Breast epithelium (tissue), 4 donors: ENCODE measurements at regions of chr15 and their contacts with region 1.

Region 1: GRCh38 chr15:80776420-80777045 is 2.6 kb upstream of the CEMIP start:
- DNase-seq: peak; percentile 62 to 77
- H3K4me3 ChIP-seq: no peak overlapping the region
- H3K27ac ChIP-seq: peak overlapping the region in 1 of 2 donors; percentile 49
- H3K4me1 ChIP-seq: peaks cover 3 to 15% of the 10 kb centered on the region in 2 donors
- H3K27me3 ChIP-seq: peaks cover 0 to 25% of the 10 kb centered on the region in 2 donors
- CTCF ChIP-seq: peak; percentile 54 to 85 (median 85)
- POLR2A ChIP-seq: no peak

Region 2: GRCh38 chr15:80450811-80451321 is 325.7 kb before region 1 on chr15:
- intact Hi-C with region 1: loop called (anchors 5 kb)
- DNase-seq: no peak
- H3K4me3 ChIP-seq: no peak overlapping the region
- H3K27ac ChIP-seq: no peak overlapping the region
- H3K4me1 ChIP-seq: no peaks in the 10 kb centered on the region
- H3K27me3 ChIP-seq: no peaks in the 10 kb centered on the region
- CTCF ChIP-seq: no peak
- POLR2A ChIP-seq: no peak

Region 3: GRCh38 chr15:81106560-81106959 is 330.0 kb after region 1 on chr15:
- intact Hi-C with region 1: loop called (anchors 5 kb)
- DNase-seq: no peak
- H3K4me3 ChIP-seq: no peak overlapping the region
- H3K27ac ChIP-seq: no peak overlapping the region
- H3K4me1 ChIP-seq: no peaks in the 10 kb centered on the region
- H3K27me3 ChIP-seq: no peaks in the 10 kb centered on the region
- CTCF ChIP-seq: peak; percentile 64 to 73 (median 70)
- POLR2A ChIP-seq: no peak

Region 4: GRCh38 chr15:82275410-82275809 is 1498.9 kb after region 1 on chr15:
- intact Hi-C with region 1: no loop called
- DNase-seq: no peak
- H3K4me3 ChIP-seq: no peak overlapping the region
- H3K27ac ChIP-seq: no peak overlapping the region
- H3K4me1 ChIP-seq: no peaks in the 10 kb centered on the region
- H3K27me3 ChIP-seq: no peaks in the 10 kb centered on the region
- CTCF ChIP-seq: no peak
- POLR2A ChIP-seq: no peak